Motor neuron (in vitro differentiated cells): ENCODE measurements at regions of chr1 and their contacts with region 1.

Region 1: DNA sequence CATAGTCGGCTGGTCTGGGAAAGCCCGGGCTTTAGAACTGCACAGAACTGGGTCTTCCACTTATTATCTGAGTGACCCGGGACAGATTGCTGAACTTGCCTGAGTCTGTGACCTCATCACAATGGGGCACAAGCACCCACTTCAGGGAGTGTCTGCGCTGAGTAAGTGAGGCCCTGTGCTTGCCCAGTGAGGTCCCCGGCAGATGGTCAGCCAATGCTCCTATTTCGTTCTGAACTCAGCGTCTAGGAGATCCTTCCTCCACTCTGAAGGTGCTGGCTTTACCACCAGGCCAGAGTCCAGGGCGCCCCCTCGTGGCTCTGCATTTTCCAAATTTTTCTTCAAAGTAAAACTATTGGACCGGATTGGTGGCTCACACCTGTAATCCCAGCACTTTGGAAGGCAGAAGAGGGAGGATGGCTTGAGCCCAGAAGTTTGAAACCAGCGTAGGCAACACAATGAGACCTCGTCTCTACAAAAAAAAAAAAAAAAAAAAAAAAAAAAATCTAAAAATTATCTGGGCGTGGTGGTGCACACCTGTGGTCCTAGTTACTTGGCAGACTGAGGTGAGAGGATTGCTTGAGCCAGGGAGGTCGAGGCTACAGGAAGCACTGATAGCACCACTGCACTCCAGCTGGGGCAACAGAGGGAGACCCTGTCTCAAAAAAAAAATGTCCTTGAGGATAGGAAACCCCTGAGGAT is 61.7 kb downstream of the FCRL5 start:
- ATAC-seq: peak in 6 of 8 experiments; percentile 29 to 82 (median 40)
- H3K4me3 ChIP-seq: no peak overlapping the region
- H3K27ac ChIP-seq: no peak overlapping the region
- H3K4me1 ChIP-seq: no peaks in the 10 kb centered on the region

Region 2: DNA sequence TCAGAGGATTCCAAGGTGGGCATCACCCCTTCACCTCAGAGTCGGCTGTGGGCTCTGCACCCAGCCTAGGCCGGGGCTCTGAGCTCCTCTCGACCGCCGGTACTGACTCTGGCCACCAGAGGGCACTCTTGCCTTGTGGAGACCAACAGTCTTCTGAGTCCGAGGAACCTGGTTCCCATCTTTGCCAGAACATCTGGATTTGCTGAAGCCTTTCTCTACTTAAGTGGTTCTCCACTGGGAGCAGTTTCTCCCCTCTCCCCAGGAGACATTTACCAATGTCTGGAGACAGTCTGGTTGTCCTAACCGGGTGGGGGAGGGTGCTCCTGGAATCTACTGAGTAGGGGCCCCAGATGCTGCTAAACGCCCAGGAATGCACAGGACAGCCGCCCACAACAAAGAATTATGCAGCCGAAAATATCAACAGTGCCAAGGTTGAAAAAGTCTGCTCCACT is 400.4 kb before region 1 on chr1:
- in situ Hi-C with region 1: loop called in 1 of 9 experiments (anchors 25 kb)
- ATAC-seq: peak; percentile 95 to 99 (median 98)
- H3K4me3 ChIP-seq: no peak overlapping the region
- H3K27ac ChIP-seq: no peak overlapping the region
- H3K4me1 ChIP-seq: peaks cover 2 to 3% of the 10 kb centered on the region in 2 donors

Region 3: DNA sequence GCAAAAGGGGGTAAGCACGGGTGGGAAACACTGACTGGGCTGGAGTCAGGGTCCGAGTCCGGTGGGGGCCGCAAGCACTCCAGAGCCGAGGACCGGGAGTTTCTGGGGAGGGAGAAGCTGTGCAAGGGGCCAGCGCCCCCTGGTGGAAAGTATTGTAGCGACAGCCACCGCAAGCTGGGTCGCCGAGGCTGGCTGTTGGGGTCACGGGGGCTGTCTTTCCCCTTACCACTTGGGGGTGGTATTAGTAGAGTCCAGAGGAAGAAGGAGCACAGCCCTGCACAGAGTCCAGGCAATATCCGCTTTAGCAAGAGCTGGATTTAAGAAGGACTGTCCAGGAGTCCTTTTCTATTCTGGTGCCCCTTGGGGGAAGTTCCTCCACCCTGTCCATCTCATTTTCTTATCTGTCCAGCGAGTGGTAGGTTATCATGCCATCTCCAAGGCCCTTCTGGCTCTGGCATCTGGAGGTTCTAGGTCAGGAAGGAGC is 334.5 kb before region 1 on chr1:
- in situ Hi-C with region 1: loop called in 2 of 9 experiments (anchors 25 kb)
- ATAC-seq: peak; percentile 50 to 90 (median 82)
- H3K4me3 ChIP-seq: no peak overlapping the region
- H3K27ac ChIP-seq: no peak overlapping the region
- H3K4me1 ChIP-seq: peaks cover 5 to 22% of the 10 kb centered on the region in 2 donors

Region 4: GRCh38 chr1:157193702-157194391 is 296.8 kb before region 1 on chr1:
- in situ Hi-C with region 1: loop called in 4 of 9 experiments (anchors 10 to 25 kb)
- ATAC-seq: peak; percentile 43 to 79 (median 59)
- H3K4me3 ChIP-seq: no peak overlapping the region
- H3K27ac ChIP-seq: no peak overlapping the region
- H3K4me1 ChIP-seq: no peaks in the 10 kb centered on the region

Region 5: GRCh38 chr1:157201767-157202166 is 288.8 kb before region 1 on chr1:
- in situ Hi-C with region 1: loop called in 5 of 9 experiments (anchors 10 to 25 kb)
- ATAC-seq: no peak
- H3K4me3 ChIP-seq: no peak overlapping the region
- H3K27ac ChIP-seq: no peak overlapping the region
- H3K4me1 ChIP-seq: no peaks in the 10 kb centered on the region

Region 6: DNA sequence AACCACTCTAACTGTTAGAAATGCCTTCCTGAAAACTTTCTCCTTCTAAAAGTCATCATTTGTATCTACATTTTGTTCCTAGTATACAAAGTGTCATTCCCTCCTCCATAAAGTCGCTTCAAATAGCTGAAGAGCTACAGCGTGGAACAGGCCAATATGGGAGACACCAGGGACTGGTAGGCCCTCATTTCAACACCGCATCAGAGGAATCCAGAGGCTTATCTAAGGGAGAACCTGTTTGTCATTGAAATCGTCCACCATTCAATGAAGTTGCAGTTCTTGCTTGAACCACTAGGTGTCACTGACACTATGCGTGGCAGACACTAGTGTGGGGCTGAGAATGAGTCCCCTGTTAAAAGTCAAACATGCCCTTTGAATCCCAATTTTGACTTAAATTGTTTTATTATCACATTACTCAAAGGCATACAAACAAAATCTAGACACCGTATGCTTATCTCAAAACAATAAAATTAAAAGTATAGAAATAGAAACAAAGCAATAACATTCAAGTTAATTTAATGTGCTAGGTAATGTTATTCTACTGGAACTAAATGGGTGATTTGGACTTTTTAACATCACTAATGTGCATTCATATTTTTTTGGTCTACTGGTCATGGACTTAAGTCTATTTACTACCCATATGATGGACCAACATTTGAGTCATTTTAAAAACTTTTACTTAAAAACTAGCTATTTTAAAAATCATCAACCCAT is 120.7 kb before region 1 on chr1:
- in situ Hi-C with region 1: loop called in 2 of 9 experiments (anchors 5 to 10 kb)
- ATAC-seq: peak; percentile 41 to 85 (median 70)
- H3K4me3 ChIP-seq: no peak overlapping the region
- H3K27ac ChIP-seq: no peak overlapping the region
- H3K4me1 ChIP-seq: no peaks in the 10 kb centered on the region

Region 7: DNA sequence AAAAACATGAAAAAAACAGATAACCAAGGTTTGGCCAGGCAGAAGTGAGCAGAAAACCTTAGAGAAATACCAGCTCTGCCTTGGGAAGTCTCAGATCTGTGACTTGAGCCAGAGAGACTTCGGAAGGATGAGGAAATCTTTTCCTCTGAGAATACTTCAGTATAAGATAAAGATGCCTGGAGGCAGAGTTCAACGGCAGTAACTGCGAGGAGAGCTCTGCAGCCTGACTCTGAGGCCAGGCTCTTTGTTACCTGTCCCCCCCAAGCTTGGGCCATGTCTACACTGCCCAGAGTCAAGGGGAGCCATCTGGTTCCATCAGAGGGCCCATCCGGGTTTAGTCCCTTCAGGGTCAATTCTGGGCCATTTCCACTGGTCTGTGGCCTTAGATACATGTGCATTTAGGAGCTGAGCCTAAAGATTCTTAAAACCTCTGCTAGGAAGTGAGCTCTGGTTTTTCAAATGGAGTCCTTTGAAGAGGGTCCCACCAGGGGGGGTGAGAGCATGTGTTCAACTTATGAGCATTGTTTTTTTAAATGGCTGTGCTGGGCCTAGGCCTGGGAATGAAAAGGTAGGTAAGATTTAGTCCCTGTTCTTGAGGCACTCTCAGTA is 511.5 kb after region 1 on chr1:
- in situ Hi-C with region 1: no loop called
- ATAC-seq: peak in 6 of 8 experiments; percentile 6 to 71 (median 38)
- H3K4me3 ChIP-seq: no peak overlapping the region
- H3K27ac ChIP-seq: peak overlapping the region in 1 of 2 donors; percentile 8
- H3K4me1 ChIP-seq: peaks cover 40 to 49% of the 10 kb centered on the region in 2 donors